GM12878 (cell line): ENCODE measurements at regions of chr2 and their contacts with region 1.

Region 1: GRCh38 chr2:44479122-44479887 is 117.6 kb downstream of the CAMKMT start:
- DNase-seq: peak; percentile 61
- ATAC-seq: peak; percentile 100
- H3K4me3 ChIP-seq: no peak overlapping the region
- H3K27ac ChIP-seq: no peak overlapping the region
- H3K4me1 ChIP-seq: no peaks in the 10 kb centered on the region
- H3K27me3 ChIP-seq: no peaks in the 10 kb centered on the region
- CTCF ChIP-seq: peak; percentile 98 to 100 (median 100); a peak in 5 of 6 replicates
- EP300 ChIP-seq: no peak
- POLR2A ChIP-seq: no peak
- RAD21 ChIP-seq: peak; percentile 99

Region 2: DNA sequence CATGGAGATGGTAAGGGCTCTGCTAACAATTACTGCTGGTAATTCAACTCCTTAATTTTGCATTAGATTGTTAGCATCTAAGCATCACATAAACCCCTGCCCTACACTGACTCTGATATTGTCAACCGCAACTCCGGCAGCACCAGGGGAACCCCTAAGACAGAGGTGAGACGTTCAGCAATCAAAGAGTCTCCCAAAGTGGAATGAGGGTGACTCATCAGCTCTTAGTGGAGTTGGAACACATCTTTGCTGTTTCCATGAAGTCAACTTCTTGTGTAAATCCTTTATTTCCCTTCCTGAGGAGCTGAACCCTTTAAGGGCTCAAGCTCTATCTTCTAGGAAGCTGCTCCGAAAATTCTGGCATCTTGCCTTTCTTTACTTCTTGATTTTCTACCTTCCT is 588.5 kb before region 1 on chr2:
- CTCF ChIA-PET with region 1: no interaction called
- POLR2A ChIA-PET with region 1: no interaction called
- RAD21 ChIA-PET with region 1: no interaction called
- SMC1A ChIA-PET with region 1: no interaction called
- in situ Hi-C with region 1: no loop called
- intact Hi-C with region 1: no loop called
- DNase-seq: no peak
- ATAC-seq: no peak
- H3K4me3 ChIP-seq: no peak overlapping the region
- H3K27ac ChIP-seq: no peak overlapping the region
- H3K4me1 ChIP-seq: 0 out of 2 replicates have a peak, but pooled peaks cover 2% of the 10 kb centered on the region
- H3K27me3 ChIP-seq: no peaks in the 10 kb centered on the region
- CTCF ChIP-seq: no peak
- EP300 ChIP-seq: no peak
- POLR2A ChIP-seq: no peak
- RAD21 ChIP-seq: no peak

Region 3: GRCh38 chr2:44314362-44314761 is 164.9 kb before region 1 on chr2:
- CTCF ChIA-PET with region 1: no interaction called
- POLR2A ChIA-PET with region 1: no interaction called
- RAD21 ChIA-PET with region 1: no interaction called
- SMC1A ChIA-PET with region 1: no interaction called
- in situ Hi-C with region 1: no loop called
- intact Hi-C with region 1: no loop called
- DNase-seq: no peak
- ATAC-seq: no peak
- H3K4me3 ChIP-seq: no peak overlapping the region
- H3K27ac ChIP-seq: no peak overlapping the region
- H3K4me1 ChIP-seq: no peaks in the 10 kb centered on the region
- H3K27me3 ChIP-seq: no peaks in the 10 kb centered on the region
- CTCF ChIP-seq: no peak
- EP300 ChIP-seq: no peak
- POLR2A ChIP-seq: no peak
- RAD21 ChIP-seq: no peak

Region 4: GRCh38 chr2:44462934-44463849 is 16.1 kb before region 1 on chr2:
- CTCF ChIA-PET with region 1: interaction called, 37 read pairs
- POLR2A ChIA-PET with region 1: interaction called, 3 read pairs
- RAD21 ChIA-PET with region 1: interaction called, 8 read pairs
- SMC1A ChIA-PET with region 1: interaction called, 16 read pairs
- in situ Hi-C with region 1: no loop called
- intact Hi-C with region 1: no loop called
- DNase-seq: no peak
- ATAC-seq: no peak
- H3K4me3 ChIP-seq: no peak overlapping the region
- H3K27ac ChIP-seq: no peak overlapping the region
- H3K4me1 ChIP-seq: no peaks in the 10 kb centered on the region
- H3K27me3 ChIP-seq: no peaks in the 10 kb centered on the region
- CTCF ChIP-seq: 0 out of 6 replicates have a peak, but pooled peaks of 1 of the 3 experiments have one; percentile 8
- EP300 ChIP-seq: no peak
- POLR2A ChIP-seq: no peak
- RAD21 ChIP-seq: no peak

Region 5: GRCh38 chr2:44543773-44544725 is 64.7 kb after region 1 on chr2:
- CTCF ChIA-PET with region 1: interaction called, 22 read pairs
- POLR2A ChIA-PET with region 1: no interaction called
- RAD21 ChIA-PET with region 1: interaction called, 10 read pairs
- SMC1A ChIA-PET with region 1: interaction called, 20 read pairs
- in situ Hi-C with region 1: no loop called
- intact Hi-C with region 1: no loop called
- DNase-seq: no peak
- ATAC-seq: no peak
- H3K4me3 ChIP-seq: no peak overlapping the region
- H3K27ac ChIP-seq: no peak overlapping the region
- H3K4me1 ChIP-seq: peaks cover 5% of the 10 kb centered on the region
- H3K27me3 ChIP-seq: no peaks in the 10 kb centered on the region
- CTCF ChIP-seq: no peak
- EP300 ChIP-seq: no peak
- POLR2A ChIP-seq: no peak
- RAD21 ChIP-seq: no peak

Region 6: GRCh38 chr2:44616667-44617155 is 137.4 kb after region 1 on chr2:
- CTCF ChIA-PET with region 1: interaction called, 14 read pairs
- POLR2A ChIA-PET with region 1: interaction called, 3 read pairs
- RAD21 ChIA-PET with region 1: interaction called, 9 read pairs
- SMC1A ChIA-PET with region 1: interaction called, 10 read pairs
- in situ Hi-C with region 1: no loop called
- intact Hi-C with region 1: no loop called
- DNase-seq: peak; percentile 65
- ATAC-seq: peak; percentile 93
- H3K4me3 ChIP-seq: peak overlapping the region; percentile 42
- H3K27ac ChIP-seq: peak overlapping the region; percentile 71
- H3K4me1 ChIP-seq: peaks cover 26% of the 10 kb centered on the region
- H3K27me3 ChIP-seq: no peaks in the 10 kb centered on the region
- CTCF ChIP-seq: no peak
- EP300 ChIP-seq: peak; percentile 37 to 72; a peak in 2 of 4 replicates
- POLR2A ChIP-seq: no peak
- RAD21 ChIP-seq: no peak

Region 7: DNA sequence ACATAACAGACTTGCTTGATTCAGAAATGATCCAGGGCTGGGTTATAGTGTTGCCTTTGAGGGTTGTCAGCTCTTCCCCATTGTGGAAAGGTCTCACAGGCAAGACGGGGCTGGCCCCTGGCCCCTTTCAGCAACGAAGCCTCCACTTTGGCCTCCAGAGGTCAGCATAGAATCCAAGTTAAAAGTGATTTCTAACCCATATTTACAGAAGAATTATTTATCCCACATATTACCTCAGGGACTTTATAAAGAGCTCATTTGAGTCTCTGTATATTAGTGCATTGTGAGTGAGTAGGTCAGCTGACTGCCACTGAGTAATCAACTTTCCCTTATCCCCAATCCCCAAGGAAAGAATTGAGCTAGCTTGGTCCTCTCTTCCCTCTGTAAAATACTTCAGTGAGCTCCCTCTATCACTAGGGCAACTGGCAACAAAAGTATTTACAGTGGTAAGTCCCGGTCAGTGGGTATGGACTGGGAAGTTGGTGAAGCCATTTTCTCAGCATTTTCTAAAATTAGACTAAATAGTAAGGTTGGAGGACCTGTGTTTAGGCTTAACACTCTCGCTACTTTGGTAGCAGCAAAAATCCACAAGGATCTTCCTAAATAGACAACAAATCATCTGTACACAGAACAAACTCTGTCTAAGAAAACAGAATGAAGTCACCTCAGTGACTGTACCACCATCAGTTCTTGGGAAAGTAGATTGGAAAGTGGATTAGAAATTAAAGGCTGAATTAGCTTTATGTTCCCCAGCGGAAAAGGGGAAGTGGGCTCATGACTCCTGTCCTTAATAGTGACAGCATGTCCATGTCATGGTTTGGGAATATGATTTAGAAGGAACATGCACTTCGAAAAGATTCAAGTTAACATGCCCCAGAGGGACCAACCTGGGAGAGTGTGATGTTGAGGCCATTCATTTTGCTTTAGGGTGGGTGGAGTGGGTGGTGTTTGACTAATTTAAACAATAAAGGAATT is 291.2 kb after region 1 on chr2:
- CTCF ChIA-PET with region 1: interaction called, 10 read pairs
- POLR2A ChIA-PET with region 1: no interaction called
- RAD21 ChIA-PET with region 1: interaction called, 4 read pairs
- SMC1A ChIA-PET with region 1: interaction called, 4 read pairs
- in situ Hi-C with region 1: no loop called
- intact Hi-C with region 1: no loop called
- DNase-seq: no peak
- ATAC-seq: peak; percentile 36
- H3K4me3 ChIP-seq: no peak overlapping the region
- H3K27ac ChIP-seq: no peak overlapping the region
- H3K4me1 ChIP-seq: no peaks in the 10 kb centered on the region
- H3K27me3 ChIP-seq: no peaks in the 10 kb centered on the region
- CTCF ChIP-seq: peak in 1 of 3 experiments; percentile 3; a peak in 1 of 6 replicates
- EP300 ChIP-seq: no peak
- POLR2A ChIP-seq: no peak
- RAD21 ChIP-seq: no peak

Region 8: DNA sequence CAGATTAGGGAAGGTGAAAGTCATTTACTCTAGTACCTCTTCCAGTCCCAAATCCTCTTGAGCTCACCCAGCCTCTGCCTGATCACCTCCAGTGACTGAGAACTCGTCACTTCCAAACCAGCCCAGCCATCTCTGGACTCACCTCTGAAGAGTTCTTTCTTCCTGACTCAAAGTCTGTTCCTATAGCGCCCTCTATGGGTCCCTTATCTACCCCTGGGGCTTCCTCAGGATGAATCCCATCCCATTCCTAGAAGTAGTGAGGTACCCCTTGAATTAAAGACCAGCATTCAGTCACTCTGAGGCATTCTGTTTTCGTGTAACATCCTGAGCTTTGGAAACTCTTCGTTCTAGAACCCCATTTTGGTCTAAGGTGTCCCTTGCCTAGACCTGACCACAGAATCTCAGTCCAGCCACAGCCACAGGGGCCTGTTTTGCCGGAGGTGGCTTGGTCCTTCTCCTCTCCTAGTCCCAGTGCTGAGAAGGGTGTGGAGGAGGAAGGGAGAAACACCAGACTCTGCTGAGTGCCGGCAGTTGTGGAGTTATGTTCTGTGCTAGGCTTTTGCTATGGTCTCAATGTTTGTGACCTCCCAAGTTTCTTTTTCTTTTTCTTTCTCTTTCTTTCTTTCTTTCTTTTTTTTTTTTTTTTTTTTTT is 494.9 kb after region 1 on chr2:
- CTCF ChIA-PET with region 1: interaction called, 28 read pairs
- POLR2A ChIA-PET with region 1: no interaction called
- RAD21 ChIA-PET with region 1: interaction called, 13 read pairs
- SMC1A ChIA-PET with region 1: interaction called, 12 read pairs
- in situ Hi-C with region 1: no loop called
- intact Hi-C with region 1: no loop called
- DNase-seq: no peak
- ATAC-seq: peak; percentile 72
- H3K4me3 ChIP-seq: no peak overlapping the region
- H3K27ac ChIP-seq: no peak overlapping the region
- H3K4me1 ChIP-seq: no peaks in the 10 kb centered on the region
- H3K27me3 ChIP-seq: no peaks in the 10 kb centered on the region; a peak in 1 of 4 replicates
- CTCF ChIP-seq: peak; percentile 37 to 54 (median 39); a peak in 5 of 6 replicates
- EP300 ChIP-seq: no peak
- POLR2A ChIP-seq: no peak
- RAD21 ChIP-seq: 0 out of 2 replicates have a peak, but pooled peaks have one; percentile 44